MCF 10A (cell line): ENCODE measurements at regions of chr3 and their contacts with region 1.

Region 1: GRCh38 chr3:156151824-156152428 is 31.5 kb downstream of the KCNAB1 start:
- DNase-seq: peak; percentile 69
- H3K4me3 Mint-ChIP-seq: no peak overlapping the region
- H3K27ac Mint-ChIP-seq: no peak overlapping the region
- H3K4me1 Mint-ChIP-seq: no peaks in the 10 kb centered on the region
- H3K27me3 Mint-ChIP-seq: no peaks in the 10 kb centered on the region
- CTCF ChIP-seq: peak; percentile 74

Region 2: DNA sequence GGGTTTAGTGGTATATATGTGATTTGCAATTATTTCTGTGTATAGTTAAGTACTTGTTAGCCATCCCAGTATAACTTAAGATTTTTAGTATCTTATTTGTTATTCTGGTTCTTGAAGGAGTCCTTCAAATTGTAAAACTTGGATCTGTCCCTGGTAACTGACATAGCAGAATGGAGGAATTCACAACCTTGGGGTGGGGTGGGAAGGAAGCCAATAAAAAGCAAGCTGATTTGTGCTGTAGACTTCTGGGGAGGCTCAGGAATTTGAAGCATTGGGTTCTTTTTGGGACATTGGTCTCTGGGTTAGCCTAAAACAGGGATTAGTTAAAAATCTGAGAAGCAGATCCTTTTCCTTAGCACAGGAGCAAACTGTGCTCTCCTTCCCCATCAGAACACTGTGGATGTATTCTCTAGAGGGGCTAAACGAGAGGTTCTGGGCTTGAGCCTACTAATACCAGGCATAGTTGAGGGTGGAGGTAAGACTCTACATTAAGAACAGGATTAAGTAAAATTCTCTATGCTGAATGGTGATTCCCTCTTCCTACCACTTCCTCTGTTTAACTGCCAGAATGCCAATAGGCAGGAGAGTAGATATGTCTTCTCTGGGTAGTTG is 239.2 kb before region 1 on chr3:
- CTCF ChIA-PET with region 1: no interaction called
- POLR2A ChIA-PET with region 1: no interaction called
- intact Hi-C with region 1: no loop called
- DNase-seq: no peak
- H3K4me3 Mint-ChIP-seq: no peak overlapping the region
- H3K27ac Mint-ChIP-seq: no peak overlapping the region
- H3K4me1 Mint-ChIP-seq: no peaks in the 10 kb centered on the region
- H3K27me3 Mint-ChIP-seq: no peaks in the 10 kb centered on the region
- CTCF ChIP-seq: no peak

Region 3: GRCh38 chr3:156017352-156018030 is 134.4 kb before region 1 on chr3:
- CTCF ChIA-PET with region 1: interaction called, 45 read pairs
- POLR2A ChIA-PET with region 1: no interaction called
- intact Hi-C with region 1: loop called (anchors 5 kb)
- DNase-seq: no peak
- H3K4me3 Mint-ChIP-seq: no peak overlapping the region
- H3K27ac Mint-ChIP-seq: no peak overlapping the region
- H3K4me1 Mint-ChIP-seq: no peaks in the 10 kb centered on the region
- H3K27me3 Mint-ChIP-seq: peaks cover 3% of the 10 kb centered on the region
- CTCF ChIP-seq: no peak

Region 4: GRCh38 chr3:156140001-156140595 is 11.8 kb before region 1 on chr3:
- CTCF ChIA-PET with region 1: interaction called, 19 read pairs
- POLR2A ChIA-PET with region 1: no interaction called
- intact Hi-C with region 1: no loop called
- DNase-seq: no peak
- H3K4me3 Mint-ChIP-seq: no peak overlapping the region
- H3K27ac Mint-ChIP-seq: no peak overlapping the region
- H3K4me1 Mint-ChIP-seq: no peaks in the 10 kb centered on the region
- H3K27me3 Mint-ChIP-seq: peaks cover 81% of the 10 kb centered on the region
- CTCF ChIP-seq: no peak

Region 5: GRCh38 chr3:156382458-156383346 is 230.8 kb after region 1 on chr3:
- CTCF ChIA-PET with region 1: interaction called, 38 read pairs
- POLR2A ChIA-PET with region 1: no interaction called
- intact Hi-C with region 1: loop called (anchors 1 kb)
- DNase-seq: peak; percentile 65
- H3K4me3 Mint-ChIP-seq: no peak overlapping the region
- H3K27ac Mint-ChIP-seq: no peak overlapping the region
- H3K4me1 Mint-ChIP-seq: no peaks in the 10 kb centered on the region
- H3K27me3 Mint-ChIP-seq: peaks cover 73% of the 10 kb centered on the region
- CTCF ChIP-seq: peak; percentile 64

Region 6: DNA sequence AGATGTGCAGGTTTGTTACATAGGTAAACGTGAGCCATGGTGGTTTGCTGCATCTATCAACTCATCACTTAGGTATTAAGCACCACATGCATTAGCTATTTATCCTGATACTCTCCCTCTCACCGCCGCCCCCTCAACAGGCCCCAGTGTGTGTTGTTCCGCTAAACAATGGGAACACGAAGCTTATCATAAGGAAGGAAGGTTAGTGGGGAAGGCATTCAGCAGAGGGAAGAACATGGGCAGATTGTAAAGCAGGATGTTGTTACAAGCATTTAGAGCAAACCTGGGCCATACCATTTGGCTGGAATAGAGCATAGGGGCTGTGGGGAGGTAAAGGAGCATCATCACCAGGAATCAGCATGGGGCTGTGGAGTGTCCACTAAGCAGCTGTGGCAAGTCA is 291.2 kb after region 1 on chr3:
- CTCF ChIA-PET with region 1: interaction called, 10 read pairs
- POLR2A ChIA-PET with region 1: no interaction called
- intact Hi-C with region 1: no loop called
- DNase-seq: no peak
- H3K4me3 Mint-ChIP-seq: no peak overlapping the region
- H3K27ac Mint-ChIP-seq: no peak overlapping the region
- H3K4me1 Mint-ChIP-seq: no peaks in the 10 kb centered on the region
- H3K27me3 Mint-ChIP-seq: peaks cover 40% of the 10 kb centered on the region
- CTCF ChIP-seq: no peak

Region 7: DNA sequence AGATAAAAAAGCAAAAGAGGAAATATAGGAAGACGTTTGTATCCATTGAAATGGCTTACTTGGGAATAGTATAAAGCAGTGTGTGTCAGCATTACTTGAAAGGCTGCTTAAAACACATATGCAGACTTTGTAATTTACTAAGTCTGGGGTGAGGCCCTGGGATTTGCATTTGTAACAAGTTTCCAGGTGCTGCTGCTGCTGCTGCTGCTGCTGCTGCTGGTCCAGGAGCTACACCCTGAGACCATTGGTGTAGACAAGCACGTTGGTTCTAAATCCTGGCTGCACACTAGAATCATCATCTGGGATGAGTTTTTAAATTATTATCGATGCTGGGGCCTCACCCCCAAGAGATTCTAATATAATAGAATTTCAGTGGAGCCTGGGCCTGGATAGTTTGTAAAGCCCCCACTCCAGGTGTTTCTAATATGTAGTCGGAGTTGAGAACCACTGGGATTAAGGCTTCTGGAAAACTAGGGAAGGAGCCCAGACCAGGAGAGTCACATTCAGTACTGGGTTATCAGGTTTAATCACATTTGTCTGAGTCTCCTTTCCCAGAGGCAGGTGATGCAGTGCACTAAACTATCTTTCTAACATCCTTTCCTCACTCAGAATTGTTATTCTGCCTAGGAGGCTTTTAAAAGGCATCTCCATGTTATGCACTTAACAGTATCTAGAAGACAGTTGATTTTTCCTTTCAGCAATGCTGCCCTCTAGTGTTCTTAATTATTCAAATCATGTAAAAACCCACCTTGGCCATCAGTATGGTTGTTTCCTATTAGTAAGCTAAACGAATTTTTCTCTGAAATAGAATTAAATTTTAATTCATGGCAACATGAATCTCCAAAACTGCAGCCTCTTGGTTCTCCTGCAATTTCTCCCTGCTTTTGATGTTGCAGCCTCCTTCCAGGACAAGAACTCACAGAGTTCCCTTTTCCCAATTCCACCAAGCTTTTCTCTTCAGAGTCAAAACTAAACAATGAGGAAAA is 357.6 kb after region 1 on chr3:
- CTCF ChIA-PET with region 1: interaction called, 274 read pairs
- POLR2A ChIA-PET with region 1: interaction called, 8 read pairs
- intact Hi-C with region 1: loop called (anchors 1 kb)
- DNase-seq: peak; percentile 58
- H3K4me3 Mint-ChIP-seq: no peak overlapping the region
- H3K27ac Mint-ChIP-seq: no peak overlapping the region
- H3K4me1 Mint-ChIP-seq: no peaks in the 10 kb centered on the region
- H3K27me3 Mint-ChIP-seq: peaks cover 48% of the 10 kb centered on the region
- CTCF ChIP-seq: peak; percentile 43

Region 8: DNA sequence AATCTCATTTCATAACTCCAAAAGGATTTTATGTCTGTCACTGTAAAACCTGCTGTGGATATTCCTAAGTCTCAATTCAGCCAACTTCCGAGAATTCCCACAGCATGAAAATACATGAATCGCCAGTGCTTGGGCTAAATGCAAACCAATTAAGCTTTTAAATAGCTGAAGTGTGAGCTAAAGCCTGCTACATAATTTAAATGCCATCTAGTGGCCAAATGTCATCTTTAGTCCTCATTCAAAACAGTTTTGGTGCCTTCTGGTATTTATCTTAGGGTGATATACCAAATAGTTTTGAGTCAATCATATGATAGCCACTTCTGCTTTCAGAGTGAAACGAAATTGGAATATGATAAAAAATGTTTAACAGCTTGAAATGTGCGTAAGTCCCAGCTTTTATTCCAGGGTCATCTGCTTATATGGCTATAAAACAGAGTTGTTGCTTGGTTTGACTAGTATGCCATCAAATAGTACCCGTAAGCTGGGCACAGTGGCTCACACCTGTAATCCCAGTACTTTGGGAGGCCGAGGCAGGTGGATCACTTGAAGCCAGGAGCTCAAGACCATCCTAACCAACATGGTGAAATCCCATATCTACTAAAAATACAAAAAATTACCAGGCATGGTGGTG is 1049.8 kb after region 1 on chr3:
- CTCF ChIA-PET with region 1: interaction called, 8 read pairs
- POLR2A ChIA-PET with region 1: no interaction called
- intact Hi-C with region 1: loop called (anchors 1 kb)
- DNase-seq: peak; percentile 52
- H3K4me3 Mint-ChIP-seq: no peak overlapping the region
- H3K27ac Mint-ChIP-seq: no peak overlapping the region
- H3K4me1 Mint-ChIP-seq: no peaks in the 10 kb centered on the region
- H3K27me3 Mint-ChIP-seq: no peaks in the 10 kb centered on the region
- CTCF ChIP-seq: peak; percentile 45